Activated CD8-positive, alpha-beta T cell treated with anti-CD3 and anti-CD28 coated beads, Interleukin-2, amount 10 ng/mL, durations not matched to agents 7 days and 5 days (primary cell): ENCODE measurements at regions of chr20 and their contacts with region 1.

Region 1: DNA sequence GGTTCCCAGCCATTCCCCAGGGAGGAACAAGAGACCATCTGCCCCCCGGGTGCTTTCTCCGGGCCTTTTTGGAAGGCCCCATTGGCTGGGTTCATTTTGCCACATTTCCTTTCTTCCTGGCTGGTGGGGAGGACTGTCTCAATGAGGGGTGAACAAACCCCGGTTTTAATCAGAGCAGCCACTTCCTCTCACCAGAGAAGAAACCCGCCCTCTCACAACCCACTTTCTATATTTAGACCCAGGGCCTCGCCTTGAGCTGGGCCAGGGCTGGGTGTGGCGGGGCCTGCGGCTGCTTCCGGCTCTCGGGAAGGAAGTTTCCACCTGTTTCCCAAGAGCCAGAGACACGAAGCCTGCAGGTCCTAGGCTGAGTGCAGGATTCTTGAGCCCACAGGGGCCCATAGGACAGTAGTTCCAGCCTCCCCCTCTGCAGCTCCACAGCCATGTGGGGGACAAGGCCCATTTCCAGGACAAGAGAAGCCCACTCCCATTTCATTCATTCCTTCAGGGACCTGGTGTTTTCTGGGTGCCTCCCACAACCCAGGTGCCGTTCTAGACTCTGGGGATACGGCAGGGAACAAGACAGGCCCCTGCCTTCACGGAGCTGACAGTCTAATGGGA is 41.8 kb downstream of the RBM38 start:
- DNase-seq: peak; percentile 90
- ATAC-seq: peak; percentile 86
- H3K4me3 Mint-ChIP-seq: peak overlapping the region; percentile 56
- H3K27ac Mint-ChIP-seq: peak overlapping the region; percentile 92
- H3K4me1 Mint-ChIP-seq: peaks cover 66% of the 10 kb centered on the region
- H3K27me3 Mint-ChIP-seq: peaks cover 11% of the 10 kb centered on the region

Region 2: DNA sequence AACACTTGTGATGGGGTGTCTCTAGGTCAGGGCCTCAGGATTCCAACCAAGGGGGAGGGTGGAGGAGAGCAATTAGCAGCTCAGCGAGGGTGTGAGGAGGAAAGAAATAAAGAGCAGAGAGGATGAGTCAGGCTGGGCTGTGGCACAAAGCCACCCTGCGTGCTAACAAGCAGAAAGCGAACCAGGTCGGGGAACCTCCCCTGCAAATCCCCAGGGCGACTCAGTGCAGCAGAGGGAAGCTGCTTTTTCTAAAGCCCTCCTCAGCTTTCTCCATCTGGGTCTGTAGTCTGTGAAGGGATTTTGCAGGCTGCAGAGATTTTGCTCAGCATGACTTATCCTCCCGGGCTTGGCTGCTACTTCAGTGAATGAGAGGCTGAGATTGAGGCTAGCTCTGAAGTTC is 109.9 kb before region 1 on chr20:
- CTCF ChIA-PET with region 1: no interaction called
- POLR2A ChIA-PET with region 1: no interaction called
- DNase-seq: no peak
- ATAC-seq: no peak
- H3K4me3 Mint-ChIP-seq: no peak overlapping the region
- H3K27ac Mint-ChIP-seq: no peak overlapping the region
- H3K4me1 Mint-ChIP-seq: peaks cover 2% of the 10 kb centered on the region
- H3K27me3 Mint-ChIP-seq: peaks cover 55% of the 10 kb centered on the region

Region 3: DNA sequence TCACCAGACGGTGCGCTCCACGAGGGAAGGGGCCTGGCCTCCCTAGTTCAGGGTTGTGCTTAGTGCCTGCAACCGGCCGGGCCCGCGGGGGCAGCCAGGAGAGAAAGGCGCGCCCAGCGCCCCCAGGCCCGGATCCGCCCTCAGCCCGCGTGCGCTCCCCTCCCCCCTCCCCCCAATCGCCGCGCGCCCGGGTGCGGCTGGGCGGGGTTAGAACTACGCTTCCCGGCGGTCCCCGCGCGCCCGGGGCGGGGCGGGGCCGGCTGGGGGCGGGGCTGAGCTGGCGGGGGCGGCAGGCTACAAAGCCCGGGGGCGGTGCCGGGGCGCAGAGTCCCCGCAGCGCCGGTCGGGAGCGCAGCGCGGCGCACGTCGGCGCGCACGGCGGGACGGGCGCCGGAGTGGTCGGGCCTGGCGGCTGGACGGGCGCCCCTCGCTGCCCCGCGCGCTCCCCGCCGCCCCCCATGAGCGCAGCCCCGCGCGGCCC is 41.9 kb before region 1 on chr20 and contains the start of gene RBM38:
- CTCF ChIA-PET with region 1: interaction called, 13 read pairs
- POLR2A ChIA-PET with region 1: interaction called, 19 read pairs
- DNase-seq: peak; percentile 79
- ATAC-seq: peak; percentile 62
- H3K4me3 Mint-ChIP-seq: peak within 1 kb of the TSS; percentile 93
- H3K27ac Mint-ChIP-seq: peak within 1 kb of the TSS; percentile 95
- H3K4me1 Mint-ChIP-seq: peaks cover 50% of the 10 kb centered on the region
- H3K27me3 Mint-ChIP-seq: no peaks in the 10 kb centered on the region
- total RNA-seq, gene RBM38: 53.8 to 57.1 TPM

Region 4: GRCh38 chr20:57398231-57398821 is 34.7 kb before region 1 on chr20:
- CTCF ChIA-PET with region 1: interaction called, 11 read pairs
- POLR2A ChIA-PET with region 1: interaction called, 10 read pairs
- DNase-seq: peak; percentile 91
- ATAC-seq: peak; percentile 80
- H3K4me3 Mint-ChIP-seq: peak overlapping the region; percentile 81
- H3K27ac Mint-ChIP-seq: peak overlapping the region; percentile 94
- H3K4me1 Mint-ChIP-seq: peaks cover 93% of the 10 kb centered on the region
- H3K27me3 Mint-ChIP-seq: no peaks in the 10 kb centered on the region